ENCODE measurements at regions of chr10 and their contacts with region 1.

Region 1: DNA sequence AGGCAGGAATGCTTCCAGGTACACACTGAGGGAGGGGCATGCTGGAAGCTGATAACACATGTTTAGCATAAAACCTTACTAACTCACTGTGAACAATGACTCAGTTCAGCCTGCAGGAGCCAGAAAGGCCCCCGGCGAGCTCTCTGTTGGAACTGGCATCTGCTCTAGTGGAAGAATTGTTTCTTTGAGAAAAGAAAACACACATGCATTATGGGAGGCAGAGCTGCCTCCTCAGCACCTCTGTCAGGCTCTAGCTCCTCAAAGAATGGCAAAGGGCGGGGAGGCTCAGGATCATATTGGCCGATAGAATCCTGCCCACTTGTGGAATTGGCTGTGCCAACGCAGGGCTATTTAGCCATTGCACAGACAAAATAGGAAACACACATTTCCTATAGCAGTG is 338.3 kb downstream of the CXCL12 start:
- DNase-seq: no peak

Region 2: GRCh38 chr10:43905512-43906236 is 140.9 kb before region 1 on chr10:
- intact Hi-C with region 1: no loop called
- DNase-seq: peak; percentile 74

Region 3: GRCh38 chr10:43970717-43971116 is 75.9 kb before region 1 on chr10:
- intact Hi-C with region 1: loop called (anchors 10 kb)
- DNase-seq: no peak

Measured in cardiac septum (tissue), 1 donor.